ENCODE measurements at regions of chr4 and their contacts with region 1.

Region 1: GRCh38 chr4:152524427-152524826 is 11.5 kb downstream of the FBXW7 start:
- DNase-seq: no peak
- ATAC-seq: peak; percentile 67
- H3K4me3 ChIP-seq: no peak overlapping the region
- H3K4me3 Mint-ChIP-seq: peak overlapping the region in 2 of 10 donors; percentile 2 to 11
- H3K27ac ChIP-seq: no peak overlapping the region
- H3K27ac Mint-ChIP-seq: peak overlapping the region in 1 of 9 donors; percentile 60
- H3K4me1 ChIP-seq: peaks cover 0 to 27% of the 10 kb centered on the region in 2 donors
- H3K4me1 Mint-ChIP-seq: peaks cover 43 to 88% (median 71%) of the 10 kb centered on the region in 7 donors
- H3K27me3 ChIP-seq: no peaks in the 10 kb centered on the region
- H3K27me3 Mint-ChIP-seq: no peaks in the 10 kb centered on the region

Region 2: GRCh38 chr4:152417648-152418047 is 106.8 kb before region 1 on chr4:
- CTCF ChIA-PET with region 1: no interaction called
- POLR2A ChIA-PET with region 1: no interaction called
- intact Hi-C with region 1: no loop called
- DNase-seq: no peak
- ATAC-seq: no peak
- H3K4me3 ChIP-seq: no peak overlapping the region
- H3K4me3 Mint-ChIP-seq: no peak overlapping the region
- H3K27ac ChIP-seq: no peak overlapping the region
- H3K27ac Mint-ChIP-seq: no peak overlapping the region
- H3K4me1 ChIP-seq: no peaks in the 10 kb centered on the region
- H3K4me1 Mint-ChIP-seq: peaks cover 11 to 82% (median 48%) of the 10 kb centered on the region in 7 donors
- H3K27me3 ChIP-seq: no peaks in the 10 kb centered on the region
- H3K27me3 Mint-ChIP-seq: no peaks in the 10 kb centered on the region

Region 3: DNA sequence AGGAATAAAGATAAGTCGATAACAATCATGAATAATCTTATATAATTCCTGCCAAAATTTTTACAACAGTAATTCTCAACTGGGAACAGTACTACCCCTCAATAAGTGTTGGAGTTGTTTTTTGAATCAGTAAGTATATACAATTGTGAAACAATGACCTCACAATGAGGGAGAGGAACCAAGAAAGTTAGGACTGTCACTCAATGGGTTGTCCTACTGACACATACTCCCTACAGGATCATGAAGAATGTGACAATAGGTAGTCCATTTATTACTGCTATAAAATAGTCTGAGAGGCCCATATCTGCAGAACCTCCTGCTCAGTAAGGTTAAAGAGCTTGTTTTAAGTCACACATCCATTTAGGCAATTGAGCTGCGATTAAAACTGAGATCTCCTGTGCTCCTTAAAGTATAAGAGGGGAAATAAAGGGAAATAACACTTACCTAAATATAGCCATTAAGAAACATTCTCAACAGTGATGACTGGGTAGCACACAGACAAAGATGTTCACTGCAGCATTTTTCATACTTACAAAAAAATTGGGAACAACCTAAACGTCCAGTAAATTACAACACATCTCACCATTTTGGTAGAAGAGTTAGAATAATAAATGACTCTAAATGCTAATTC is 14.7 kb before region 1 on chr4:
- CTCF ChIA-PET with region 1: interaction called, 3 read pairs
- POLR2A ChIA-PET with region 1: no interaction called
- intact Hi-C with region 1: loop called in 1 of 2 experiments (anchors 2 kb)
- DNase-seq: no peak
- ATAC-seq: no peak
- H3K4me3 ChIP-seq: no peak overlapping the region
- H3K4me3 Mint-ChIP-seq: no peak overlapping the region
- H3K27ac ChIP-seq: no peak overlapping the region
- H3K27ac Mint-ChIP-seq: peak overlapping the region in 2 of 9 donors; percentile 9 to 62
- H3K4me1 ChIP-seq: peaks cover 0 to 7% of the 10 kb centered on the region in 2 donors
- H3K4me1 Mint-ChIP-seq: peaks cover 29 to 59% (median 50%) of the 10 kb centered on the region in 7 donors
- H3K27me3 ChIP-seq: no peaks in the 10 kb centered on the region
- H3K27me3 Mint-ChIP-seq: no peaks in the 10 kb centered on the region

Region 4: GRCh38 chr4:152559641-152560040 is 35.2 kb after region 1 on chr4:
- CTCF ChIA-PET with region 1: no interaction called
- POLR2A ChIA-PET with region 1: no interaction called
- intact Hi-C with region 1: loop called in 1 of 2 experiments (anchors 5 kb)
- DNase-seq: no peak
- ATAC-seq: no peak
- H3K4me3 ChIP-seq: no peak overlapping the region
- H3K4me3 Mint-ChIP-seq: no peak overlapping the region
- H3K27ac ChIP-seq: no peak overlapping the region
- H3K27ac Mint-ChIP-seq: no peak overlapping the region
- H3K4me1 ChIP-seq: peaks cover 3 to 5% of the 10 kb centered on the region in 2 donors
- H3K4me1 Mint-ChIP-seq: peaks cover 7 to 35% (median 21%) of the 10 kb centered on the region in 7 donors
- H3K27me3 ChIP-seq: no peaks in the 10 kb centered on the region
- H3K27me3 Mint-ChIP-seq: no peaks in the 10 kb centered on the region

Region 5: DNA sequence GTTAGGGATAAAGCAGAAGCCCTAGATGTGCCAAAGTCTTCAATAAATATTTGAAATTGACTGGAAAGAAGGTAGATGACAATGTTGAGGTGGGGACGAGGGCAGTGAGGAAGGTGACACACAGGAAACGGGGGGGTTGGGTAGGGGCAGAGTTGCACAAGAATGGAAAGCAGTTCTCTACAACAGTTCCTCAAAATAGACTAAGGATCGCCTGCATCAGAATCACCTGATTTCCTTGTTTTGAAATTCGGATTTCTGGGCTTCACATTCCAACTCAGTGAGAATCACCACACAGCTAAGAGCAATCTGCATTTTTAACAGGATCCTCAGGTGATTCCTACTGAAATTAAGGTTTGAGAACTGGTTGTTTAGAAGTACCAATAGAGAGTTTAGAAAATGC is 325.9 kb after region 1 on chr4:
- CTCF ChIA-PET with region 1: no interaction called
- POLR2A ChIA-PET with region 1: no interaction called
- intact Hi-C with region 1: no loop called
- DNase-seq: peak in 4 of 9 donors; percentile 2 to 20 (median 11)
- ATAC-seq: peak; percentile 78
- H3K4me3 ChIP-seq: no peak overlapping the region
- H3K4me3 Mint-ChIP-seq: peak overlapping the region in 5 of 10 donors; percentile 9 to 40 (median 34)
- H3K27ac ChIP-seq: no peak overlapping the region
- H3K27ac Mint-ChIP-seq: peak overlapping the region in 4 of 9 donors; percentile 9 to 55 (median 36)
- H3K4me1 ChIP-seq: peaks cover 0 to 11% of the 10 kb centered on the region in 2 donors
- H3K4me1 Mint-ChIP-seq: peaks cover 13 to 26% (median 21%) of the 10 kb centered on the region in 7 donors
- H3K27me3 ChIP-seq: no peaks in the 10 kb centered on the region
- H3K27me3 Mint-ChIP-seq: no peaks in the 10 kb centered on the region